Ascending aorta (tissue), 2 donors: ENCODE measurements at regions of chr4 and their contacts with region 1.

Region 1: GRCh38 chr4:47914220-47914925 is at the start of gene NFXL1:
- DNase-seq: peak; percentile 95 to 99
- H3K4me3 ChIP-seq: peak within 1 kb of the TSS; percentile 82 to 87
- H3K27ac ChIP-seq: peak within 1 kb of the TSS; percentile 61 to 70
- H3K4me1 ChIP-seq: no peaks in the 10 kb centered on the region
- H3K27me3 ChIP-seq: no peaks in the 10 kb centered on the region
- CTCF ChIP-seq: no peak
- total RNA-seq, gene NFXL1: 5.2 TPM

Region 2: DNA sequence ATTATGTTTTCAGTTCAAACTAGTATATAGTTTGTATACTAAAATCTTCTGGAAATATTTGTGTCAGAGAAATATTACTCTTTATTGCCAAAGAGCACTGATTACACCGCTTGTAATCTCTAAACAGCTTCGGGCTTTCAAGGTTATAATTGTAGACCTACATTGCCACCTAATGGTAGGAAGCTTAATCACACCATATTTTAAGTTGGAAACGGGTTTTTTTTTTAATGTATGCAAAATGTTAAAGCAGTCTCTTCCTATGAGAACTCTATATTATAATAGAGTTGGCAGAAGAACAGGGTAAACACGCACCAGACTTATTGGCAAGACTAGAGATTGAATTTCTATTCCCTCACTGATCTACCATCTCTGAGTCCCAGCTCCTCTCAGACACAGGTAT is 19.5 kb after region 1 on chr4:
- intact Hi-C with region 1: loop called (anchors 2 kb)
- DNase-seq: no peak
- H3K4me3 ChIP-seq: no peak overlapping the region
- H3K27ac ChIP-seq: no peak overlapping the region
- H3K4me1 ChIP-seq: no peaks in the 10 kb centered on the region
- H3K27me3 ChIP-seq: no peaks in the 10 kb centered on the region
- CTCF ChIP-seq: peak in 2 of 3 experiments; percentile 57 to 63

Region 3: GRCh38 chr4:48016141-48017103 is 102.0 kb after region 1 on chr4 and contains the starts of genes CNGA1 and NIPAL1:
- intact Hi-C with region 1: loop called (anchors 2 kb)
- DNase-seq: peak in 1 of 2 donors; percentile 85
- H3K4me3 ChIP-seq: peak within 1 kb of the TSS; percentile 61 to 69
- H3K27ac ChIP-seq: peak within 1 kb of the TSS in 1 of 2 donors; percentile 23
- H3K4me1 ChIP-seq: peaks cover 0 to 2% of the 10 kb centered on the region in 2 donors
- H3K27me3 ChIP-seq: no peaks in the 10 kb centered on the region
- CTCF ChIP-seq: peak in 1 of 3 experiments; percentile 31
- total RNA-seq, gene CNGA1: not detected
- total RNA-seq, gene NIPAL1: 2.0 TPM

Region 4: DNA sequence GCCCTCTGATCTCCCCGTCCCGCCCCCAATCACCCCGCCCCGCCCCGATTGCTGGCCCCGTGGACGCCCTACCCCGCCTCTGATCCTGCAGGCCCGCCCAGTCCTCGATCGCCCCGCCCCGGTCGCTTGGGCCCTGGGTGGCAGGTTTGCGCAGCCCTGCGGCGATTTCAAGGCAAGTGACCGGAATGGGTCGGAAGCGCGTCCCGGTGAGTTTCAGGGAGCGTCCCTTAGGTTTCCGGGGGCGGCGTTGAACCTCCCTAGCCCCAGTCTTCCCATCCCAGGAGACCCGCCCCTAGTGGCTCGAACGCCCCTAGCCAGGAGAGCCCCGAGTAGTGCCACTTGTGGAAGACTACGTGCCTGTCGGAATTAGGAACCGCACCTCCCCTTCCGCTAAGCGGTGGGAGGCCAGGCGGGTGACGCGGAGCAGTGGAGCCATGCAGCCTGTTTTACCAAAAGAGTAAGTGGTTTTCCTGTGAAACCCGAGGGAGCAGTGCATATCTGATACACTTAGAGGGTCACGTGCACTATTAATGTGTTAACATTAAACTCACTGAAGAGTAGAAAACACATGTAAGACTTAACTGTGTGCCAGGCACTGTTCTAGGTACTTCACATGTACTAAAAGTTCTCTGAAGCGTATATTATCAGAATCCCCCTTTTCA is 355.6 kb after region 1 on chr4:
- intact Hi-C with region 1: loop called (anchors 5 kb)
- DNase-seq: peak; percentile 69 to 96
- H3K4me3 ChIP-seq: peak overlapping the region; percentile 88 to 92
- H3K27ac ChIP-seq: peak overlapping the region; percentile 78 to 80
- H3K4me1 ChIP-seq: peaks cover 0 to 3% of the 10 kb centered on the region in 2 donors
- H3K27me3 ChIP-seq: no peaks in the 10 kb centered on the region
- CTCF ChIP-seq: peak in 1 of 3 experiments; percentile 38

Region 5: GRCh38 chr4:48340965-48341775 is 426.8 kb after region 1 on chr4 and contains the start of gene SLAIN2:
- intact Hi-C with region 1: loop called (anchors 2 kb)
- DNase-seq: peak; percentile 96 to 100
- H3K4me3 ChIP-seq: peak within 1 kb of the TSS; percentile 86 to 93
- H3K27ac ChIP-seq: peak within 1 kb of the TSS; percentile 98 to 99
- H3K4me1 ChIP-seq: peaks cover 11 to 14% of the 10 kb centered on the region in 2 donors
- H3K27me3 ChIP-seq: no peaks in the 10 kb centered on the region
- CTCF ChIP-seq: peak; percentile 26 to 51 (median 35)
- total RNA-seq, gene SLAIN2: 26.3 TPM